ENCODE measurements at regions of chr6 and their contacts with region 1.

Region 1: DNA sequence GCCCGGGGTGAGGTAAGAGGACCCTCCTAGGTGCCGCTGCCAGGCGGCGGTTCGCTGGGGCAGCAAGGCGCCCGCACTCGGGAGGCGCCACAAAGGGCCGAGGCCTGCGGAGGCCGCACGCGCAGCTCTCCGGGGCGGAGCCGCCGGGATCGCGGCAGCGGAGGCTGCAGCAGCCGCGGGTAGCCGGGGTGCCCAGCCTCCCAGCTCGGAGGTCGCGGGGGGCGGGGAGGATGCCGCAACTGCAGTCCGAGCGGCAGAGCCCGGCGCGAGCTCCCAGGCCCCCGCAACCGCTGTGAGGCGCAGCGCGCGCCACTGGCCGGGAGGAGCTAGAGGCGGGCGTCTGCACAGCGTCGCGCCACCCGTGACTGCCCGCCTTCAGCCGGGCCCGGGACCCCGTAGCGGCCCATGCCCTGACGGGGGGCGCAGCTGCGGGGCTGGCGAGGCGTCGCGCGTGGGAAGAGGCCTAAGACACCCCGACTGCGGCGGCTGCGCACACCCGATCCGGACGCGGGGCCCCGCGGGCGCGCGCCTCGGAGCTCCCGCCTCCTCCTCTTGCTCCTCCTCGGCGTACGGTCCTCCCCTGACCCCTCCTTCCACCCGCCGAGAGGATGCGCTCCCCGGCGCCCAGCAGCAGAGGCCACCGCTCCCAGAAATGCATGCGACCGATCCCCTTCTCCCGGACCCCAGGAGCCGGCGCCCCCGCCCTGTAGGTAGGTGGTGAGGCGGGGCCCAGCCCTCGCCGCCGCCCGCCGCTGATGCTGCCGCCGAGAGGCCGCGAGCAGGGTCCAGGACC is at the start of gene NCOA7:
- DNase-seq: peak; percentile 69 to 84 (median 81)
- ATAC-seq: peak; percentile 89
- H3K4me3 ChIP-seq: peak within 1 kb of the TSS; percentile 80
- H3K4me3 Mint-ChIP-seq: peak within 1 kb of the TSS; percentile 86 to 98 (median 93)
- H3K27ac ChIP-seq: peak within 1 kb of the TSS; percentile 96
- H3K27ac Mint-ChIP-seq: peak within 1 kb of the TSS; percentile 97 to 100 (median 98)
- H3K4me1 ChIP-seq: peaks cover 28 to 37% of the 10 kb centered on the region in 2 donors
- H3K4me1 Mint-ChIP-seq: peaks cover 29 to 60% (median 51%) of the 10 kb centered on the region in 7 donors
- H3K27me3 ChIP-seq: no peaks in the 10 kb centered on the region
- H3K27me3 Mint-ChIP-seq: no peaks in the 10 kb centered on the region
- total RNA-seq, gene NCOA7: 30.6 to 55.6 (median 38.0) TPM

Region 2: DNA sequence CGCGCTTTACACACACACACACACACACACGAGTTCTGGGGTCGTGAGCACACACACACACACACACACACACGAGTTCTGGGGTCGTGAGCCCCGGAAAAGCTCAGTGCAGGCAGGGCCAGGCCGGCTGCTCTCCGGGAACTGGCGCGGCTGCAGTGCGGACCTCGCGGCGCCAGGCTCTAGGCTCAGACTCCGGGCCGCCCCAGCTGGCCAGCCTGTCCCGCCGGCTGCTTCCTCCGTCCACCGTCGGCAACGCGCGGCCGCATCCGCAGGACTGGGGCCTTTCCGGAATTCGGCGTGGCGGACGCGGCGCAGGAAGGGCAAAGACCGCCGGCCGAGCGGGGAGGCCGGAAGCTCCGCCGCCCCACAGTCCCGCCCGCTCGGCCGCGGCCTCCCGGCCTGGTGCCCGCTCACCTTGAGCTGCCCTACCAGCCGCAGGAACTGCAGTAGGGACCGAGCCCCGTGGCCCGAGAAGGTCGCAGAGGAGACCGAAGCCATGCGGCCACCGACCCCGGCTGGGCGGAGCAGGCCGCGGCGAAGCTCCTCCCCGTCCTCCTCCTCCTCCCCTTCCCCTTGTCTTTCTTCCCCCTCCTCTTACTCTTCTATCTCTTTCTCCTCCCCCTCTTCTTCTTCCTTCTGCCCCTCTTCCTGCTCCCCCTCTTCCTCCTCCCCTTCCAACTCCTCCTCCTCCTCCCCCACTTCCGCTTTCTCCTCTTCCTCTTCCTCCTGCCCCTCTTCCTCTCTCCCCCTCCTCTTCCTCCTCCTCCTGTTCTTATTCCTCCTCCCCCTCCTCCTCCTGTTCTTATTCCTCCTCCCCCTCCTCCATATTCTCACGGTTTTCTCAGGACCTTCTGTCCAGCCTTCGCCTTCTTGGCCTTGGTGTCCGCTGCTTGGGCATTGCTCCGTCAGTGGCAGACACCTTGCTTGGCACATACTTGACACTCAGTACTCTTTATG is 488.8 kb before region 1 on chr6 and contains the start of gene HDDC2:
- CTCF ChIA-PET with region 1: no interaction called
- POLR2A ChIA-PET with region 1: interaction called, 23 read pairs
- intact Hi-C with region 1: no loop called
- DNase-seq: peak; percentile 23 to 66 (median 33)
- ATAC-seq: peak; percentile 66
- H3K4me3 ChIP-seq: peak within 1 kb of the TSS; percentile 61
- H3K4me3 Mint-ChIP-seq: peak within 1 kb of the TSS; percentile 83 to 95 (median 92)
- H3K27ac ChIP-seq: peak within 1 kb of the TSS; percentile 76
- H3K27ac Mint-ChIP-seq: peak within 1 kb of the TSS; percentile 64 to 95 (median 92)
- H3K4me1 ChIP-seq: peaks cover 25 to 34% of the 10 kb centered on the region in 2 donors
- H3K4me1 Mint-ChIP-seq: peaks cover 43 to 65% (median 63%) of the 10 kb centered on the region in 7 donors
- H3K27me3 ChIP-seq: no peaks in the 10 kb centered on the region
- H3K27me3 Mint-ChIP-seq: peaks cover 0 to 29% (median 0%) of the 10 kb centered on the region in 5 donors
- total RNA-seq, gene HDDC2: 33.4 to 58.5 (median 54.8) TPM

Region 3: DNA sequence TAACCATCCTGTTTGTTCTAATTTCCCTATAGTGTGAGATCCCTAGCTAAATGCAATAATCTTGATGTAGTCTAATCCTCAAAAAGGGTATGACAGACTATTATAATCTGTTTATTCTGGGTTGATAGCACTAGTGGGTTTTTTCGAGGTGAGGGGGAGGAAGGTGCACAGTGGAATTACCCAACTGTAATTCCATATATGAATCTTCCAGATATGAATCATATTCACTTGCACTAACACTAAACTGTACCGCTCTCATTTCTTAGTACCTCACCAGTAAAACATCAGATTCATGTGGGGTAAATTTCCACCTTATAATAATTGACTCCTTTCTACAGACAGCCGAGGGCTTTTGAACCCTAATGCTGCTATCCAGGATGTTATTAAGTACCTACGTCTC is 16.7 kb after region 1 on chr6:
- CTCF ChIA-PET with region 1: interaction called, 3 read pairs
- POLR2A ChIA-PET with region 1: interaction called, 11 read pairs
- intact Hi-C with region 1: loop called in 1 of 2 experiments (anchors 1 kb)
- DNase-seq: no peak
- ATAC-seq: no peak
- H3K4me3 ChIP-seq: no peak overlapping the region
- H3K4me3 Mint-ChIP-seq: no peak overlapping the region
- H3K27ac ChIP-seq: no peak overlapping the region
- H3K27ac Mint-ChIP-seq: peak overlapping the region in 2 of 9 donors; percentile 12 to 57
- H3K4me1 ChIP-seq: peaks cover 0 to 7% of the 10 kb centered on the region in 2 donors
- H3K4me1 Mint-ChIP-seq: peaks cover 20 to 74% (median 55%) of the 10 kb centered on the region in 7 donors
- H3K27me3 ChIP-seq: no peaks in the 10 kb centered on the region
- H3K27me3 Mint-ChIP-seq: no peaks in the 10 kb centered on the region

Region 4: DNA sequence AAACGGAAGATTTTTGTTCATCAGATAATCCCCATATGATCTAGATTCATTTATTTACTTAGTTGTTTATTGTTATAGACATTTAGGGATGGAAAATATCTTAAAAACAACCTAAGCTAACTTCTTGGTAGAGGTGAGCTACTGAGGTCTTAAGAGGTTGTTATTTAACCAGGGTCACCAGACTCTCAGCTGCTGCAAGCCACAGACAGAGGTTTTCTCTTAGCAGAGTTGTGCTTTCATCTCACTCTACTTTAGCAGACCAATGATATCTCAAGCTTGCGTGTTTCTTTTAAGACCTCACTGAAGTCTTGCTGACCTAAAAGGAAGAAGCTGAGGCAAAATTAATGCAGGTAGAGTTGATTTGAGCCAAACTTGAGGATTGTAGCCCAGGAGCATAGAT is 43.8 kb after region 1 on chr6:
- CTCF ChIA-PET with region 1: interaction called, 7 read pairs
- POLR2A ChIA-PET with region 1: interaction called, 81 read pairs
- intact Hi-C with region 1: loop called (anchors 1 kb)
- DNase-seq: peak in 1 of 9 donors; percentile 13
- ATAC-seq: peak; percentile 55
- H3K4me3 ChIP-seq: no peak overlapping the region
- H3K4me3 Mint-ChIP-seq: peak overlapping the region in 6 of 10 donors; percentile 16 to 73 (median 40)
- H3K27ac ChIP-seq: no peak overlapping the region
- H3K27ac Mint-ChIP-seq: peak overlapping the region in 7 of 9 donors; percentile 22 to 78 (median 48)
- H3K4me1 ChIP-seq: peaks cover 12 to 38% of the 10 kb centered on the region in 2 donors
- H3K4me1 Mint-ChIP-seq: peaks cover 39 to 64% (median 45%) of the 10 kb centered on the region in 7 donors
- H3K27me3 ChIP-seq: no peaks in the 10 kb centered on the region
- H3K27me3 Mint-ChIP-seq: no peaks in the 10 kb centered on the region

Region 5: DNA sequence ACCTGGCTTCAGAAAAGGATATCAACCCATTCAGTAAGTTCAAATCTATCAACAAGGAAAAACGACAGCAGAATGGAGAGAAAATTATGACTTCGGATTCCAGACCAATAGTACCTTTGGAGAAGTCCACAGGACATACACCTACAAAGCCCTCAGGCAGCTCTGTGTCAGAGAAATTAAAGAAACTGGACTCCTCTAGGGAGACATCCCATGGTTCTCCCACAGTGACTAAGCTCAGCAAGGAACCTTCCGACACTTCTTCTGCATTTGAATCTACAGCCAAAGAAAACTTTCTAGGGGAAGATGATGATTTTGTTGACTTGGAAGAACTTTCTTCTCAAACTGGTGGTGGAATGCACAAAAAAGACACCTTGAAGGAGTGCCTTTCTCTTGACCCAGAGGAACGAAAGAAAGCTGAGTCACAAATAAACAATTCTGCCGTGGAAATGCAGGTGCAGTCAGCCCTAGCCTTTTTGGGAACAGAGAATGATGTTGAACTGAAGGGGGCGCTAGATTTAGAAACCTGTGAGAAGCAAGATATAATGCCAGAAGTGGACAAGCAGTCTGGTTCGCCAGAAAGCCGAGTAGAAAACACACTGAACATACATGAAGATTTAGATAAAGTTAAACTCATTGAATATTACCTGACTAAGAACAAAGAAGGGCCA is 98.6 kb after region 1 on chr6:
- CTCF ChIA-PET with region 1: interaction called, 6 read pairs
- POLR2A ChIA-PET with region 1: interaction called, 15 read pairs
- intact Hi-C with region 1: loop called in 1 of 2 experiments (anchors 2 kb)
- DNase-seq: peak in 5 of 9 donors; percentile 16 to 36 (median 19)
- ATAC-seq: no peak
- H3K4me3 ChIP-seq: no peak overlapping the region
- H3K4me3 Mint-ChIP-seq: no peak overlapping the region
- H3K27ac ChIP-seq: no peak overlapping the region
- H3K27ac Mint-ChIP-seq: peak overlapping the region in 1 of 9 donors; percentile 70
- H3K4me1 ChIP-seq: no peaks in the 10 kb centered on the region
- H3K4me1 Mint-ChIP-seq: peaks cover 0 to 5% (median 0%) of the 10 kb centered on the region in 7 donors
- H3K27me3 ChIP-seq: no peaks in the 10 kb centered on the region
- H3K27me3 Mint-ChIP-seq: no peaks in the 10 kb centered on the region

Region 6: DNA sequence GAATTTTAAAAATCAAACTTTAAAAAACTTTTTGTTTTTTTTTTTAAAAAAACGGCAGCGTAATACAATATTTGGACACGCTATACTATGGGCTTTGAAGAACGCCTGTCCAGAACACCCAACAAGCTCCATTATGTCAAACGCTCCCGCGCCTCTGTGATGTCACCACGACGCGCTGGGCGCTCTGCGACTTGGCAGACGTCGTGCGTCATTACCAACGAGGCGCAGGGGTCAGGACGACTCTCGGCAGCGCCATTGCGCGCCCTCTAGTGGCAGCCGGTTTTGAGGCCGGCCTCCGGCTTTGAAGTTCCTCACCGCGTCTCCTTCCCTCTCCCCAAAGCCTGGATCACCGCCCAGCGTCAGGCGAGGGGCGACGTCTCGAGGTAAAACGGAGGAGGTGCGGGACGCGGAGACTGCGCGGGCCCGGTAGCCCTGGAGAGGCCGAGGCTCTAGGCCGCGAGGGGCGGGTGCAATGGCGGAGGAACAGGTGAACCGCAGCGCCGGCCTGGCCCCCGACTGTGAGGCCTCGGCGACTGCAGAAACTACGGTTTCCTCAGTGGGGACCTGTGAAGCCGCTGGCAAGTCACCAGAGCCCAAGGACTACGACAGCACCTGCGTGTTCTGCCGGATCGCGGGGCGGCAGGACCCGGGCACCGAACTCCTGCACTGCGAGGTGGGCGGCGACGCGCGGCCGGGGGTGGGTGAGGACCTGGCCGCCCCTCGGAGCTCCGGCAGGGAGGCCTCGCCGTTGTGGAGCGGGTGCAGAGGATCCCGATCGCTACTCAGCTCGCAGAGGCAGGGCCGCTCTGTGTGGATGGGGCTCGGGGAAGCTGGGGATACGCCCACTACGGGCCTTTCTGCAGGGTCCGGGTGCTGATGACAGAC is 166.2 kb after region 1 on chr6 and contains the start of gene HINT3:
- CTCF ChIA-PET with region 1: interaction called, 40 read pairs
- POLR2A ChIA-PET with region 1: interaction called, 74 read pairs
- intact Hi-C with region 1: loop called (anchors 1 kb)
- DNase-seq: peak; percentile 94 to 98 (median 97)
- ATAC-seq: peak; percentile 96
- H3K4me3 ChIP-seq: peak within 1 kb of the TSS; percentile 78
- H3K4me3 Mint-ChIP-seq: peak within 1 kb of the TSS in 1 of 10 donors; percentile 69
- H3K27ac ChIP-seq: peak within 1 kb of the TSS; percentile 98
- H3K27ac Mint-ChIP-seq: peak within 1 kb of the TSS in 3 of 9 donors; percentile 62 to 76 (median 73)
- H3K4me1 ChIP-seq: peaks cover 16 to 18% of the 10 kb centered on the region in 2 donors
- H3K4me1 Mint-ChIP-seq: peaks cover 0 to 22% (median 7%) of the 10 kb centered on the region in 7 donors
- H3K27me3 ChIP-seq: no peaks in the 10 kb centered on the region
- H3K27me3 Mint-ChIP-seq: peaks cover 0 to 7% (median 5%) of the 10 kb centered on the region in 5 donors
- total RNA-seq, gene HINT3: 7.7 to 12.4 (median 9.5) TPM

Region 7: GRCh38 chr6:125986300-125987025 is 195.9 kb after region 1 on chr6 and contains the start of gene TRMT11:
- CTCF ChIA-PET with region 1: no interaction called
- POLR2A ChIA-PET with region 1: interaction called, 39 read pairs
- intact Hi-C with region 1: loop called (anchors 1 kb)
- DNase-seq: peak; percentile 58 to 80 (median 77)
- ATAC-seq: peak; percentile 95
- H3K4me3 ChIP-seq: peak within 1 kb of the TSS; percentile 89
- H3K4me3 Mint-ChIP-seq: peak within 1 kb of the TSS in 4 of 10 donors; percentile 12 to 40 (median 24)
- H3K27ac ChIP-seq: peak within 1 kb of the TSS; percentile 76
- H3K27ac Mint-ChIP-seq: no peak within 1 kb of the TSS
- H3K4me1 ChIP-seq: peaks cover 14 to 21% of the 10 kb centered on the region in 2 donors
- H3K4me1 Mint-ChIP-seq: peaks cover 0 to 19% (median 2%) of the 10 kb centered on the region in 7 donors
- H3K27me3 ChIP-seq: no peaks in the 10 kb centered on the region
- H3K27me3 Mint-ChIP-seq: no peaks in the 10 kb centered on the region
- total RNA-seq, gene TRMT11: 13.6 to 34.1 (median 20.1) TPM